Activated CD4-positive, alpha-beta T cell treated with anti-CD3 and anti-CD28 coated beads for 36 hours (primary cell): ENCODE measurements at regions of chr4 and their contacts with region 1.

Region 1: GRCh38 chr4:81351654-81352445 is 119.9 kb downstream of the RASGEF1B start:
- DNase-seq: peak; percentile 82
- ATAC-seq: peak; percentile 74
- H3K4me3 Mint-ChIP-seq: no peak overlapping the region
- H3K27ac Mint-ChIP-seq: no peak overlapping the region
- H3K4me1 Mint-ChIP-seq: no peaks in the 10 kb centered on the region
- H3K27me3 Mint-ChIP-seq: peaks cover 5% of the 10 kb centered on the region

Region 2: DNA sequence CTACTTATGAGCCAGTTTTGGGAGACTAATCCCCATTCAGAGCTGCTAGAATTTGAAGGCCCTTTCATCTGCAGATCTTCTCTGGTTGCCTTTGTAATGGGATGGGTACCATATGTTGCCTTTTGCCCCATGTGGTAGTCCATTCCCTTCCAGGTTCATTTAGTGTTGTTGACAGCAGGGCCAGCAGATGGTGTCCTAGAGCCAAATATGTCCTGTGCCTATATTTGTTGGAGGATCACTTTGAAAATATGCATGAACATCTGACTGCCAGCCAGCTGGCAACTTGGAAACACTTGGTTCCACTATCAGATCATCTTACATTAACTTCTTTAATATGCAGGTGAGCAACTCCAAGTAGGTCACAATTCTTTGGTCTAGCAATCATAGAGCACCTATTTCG is 985.9 kb before region 1 on chr4:
- CTCF ChIA-PET with region 1: interaction called, 3 read pairs
- POLR2A ChIA-PET with region 1: no interaction called
- intact Hi-C with region 1: loop called (anchors 5 kb)
- DNase-seq: peak; percentile 68
- ATAC-seq: no peak
- H3K4me3 Mint-ChIP-seq: no peak overlapping the region
- H3K27ac Mint-ChIP-seq: no peak overlapping the region
- H3K4me1 Mint-ChIP-seq: peaks cover 6% of the 10 kb centered on the region
- H3K27me3 Mint-ChIP-seq: no peaks in the 10 kb centered on the region

Region 3: GRCh38 chr4:80989921-80990544 is 361.8 kb before region 1 on chr4:
- CTCF ChIA-PET with region 1: interaction called, 3 read pairs
- POLR2A ChIA-PET with region 1: no interaction called
- intact Hi-C with region 1: loop called in 1 of 2 experiments (anchors 5 kb)
- DNase-seq: no peak
- ATAC-seq: peak; percentile 49
- H3K4me3 Mint-ChIP-seq: no peak overlapping the region
- H3K27ac Mint-ChIP-seq: no peak overlapping the region
- H3K4me1 Mint-ChIP-seq: no peaks in the 10 kb centered on the region
- H3K27me3 Mint-ChIP-seq: peaks cover 4% of the 10 kb centered on the region

Region 4: DNA sequence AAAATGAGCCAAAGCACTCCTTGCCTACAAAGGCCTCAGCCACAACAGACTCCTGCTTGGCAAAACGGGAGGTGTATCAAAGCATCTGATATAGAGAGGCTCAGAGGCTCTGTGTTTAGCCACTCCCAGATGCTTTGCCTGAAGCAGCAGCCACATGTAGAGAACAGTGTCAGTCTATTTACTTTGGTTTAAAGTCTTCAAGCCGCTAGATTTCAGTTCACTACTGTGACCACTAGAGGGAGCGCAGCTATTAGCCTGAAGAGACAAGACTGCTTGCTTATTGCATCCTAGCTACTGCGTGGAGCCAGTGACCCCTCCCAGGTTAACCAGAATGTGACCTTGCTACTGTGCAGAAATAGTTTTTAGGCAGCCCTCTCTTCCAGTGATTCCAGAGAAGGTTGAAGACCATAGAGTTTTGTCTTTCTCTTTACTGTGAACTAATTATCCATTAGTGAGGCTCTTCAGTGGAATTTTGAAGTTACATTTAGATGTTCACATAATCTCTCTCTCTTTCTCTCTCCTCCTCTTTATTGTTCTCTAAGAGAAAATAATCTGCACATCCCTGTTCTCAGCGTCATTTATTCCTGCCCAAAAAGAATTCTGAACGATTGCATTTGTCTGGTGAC is 282.0 kb before region 1 on chr4:
- CTCF ChIA-PET with region 1: interaction called, 42 read pairs
- POLR2A ChIA-PET with region 1: no interaction called
- intact Hi-C with region 1: loop called (anchors 1 kb)
- DNase-seq: peak; percentile 74
- ATAC-seq: peak; percentile 78
- H3K4me3 Mint-ChIP-seq: no peak overlapping the region
- H3K27ac Mint-ChIP-seq: no peak overlapping the region
- H3K4me1 Mint-ChIP-seq: peaks cover 2% of the 10 kb centered on the region
- H3K27me3 Mint-ChIP-seq: peaks cover 10% of the 10 kb centered on the region

Region 5: DNA sequence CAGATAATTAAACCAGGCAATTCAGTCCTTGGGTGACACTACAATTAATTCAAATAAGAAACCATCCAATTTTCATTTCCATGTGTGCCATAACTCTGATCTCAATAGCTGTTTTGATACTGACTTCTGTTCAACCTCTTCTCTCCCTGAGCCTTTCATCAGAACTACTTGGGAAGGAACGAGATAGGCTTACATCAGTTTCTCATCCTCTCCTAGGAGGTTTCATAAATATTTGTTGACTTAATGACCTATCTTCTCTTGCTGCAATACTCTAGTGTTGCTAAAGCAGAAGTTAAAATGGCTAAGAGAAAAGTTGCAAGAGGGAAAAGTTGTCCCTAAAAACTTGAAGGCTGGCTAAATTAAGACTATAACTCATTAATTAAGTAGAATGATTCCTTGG is 178.6 kb before region 1 on chr4:
- CTCF ChIA-PET with region 1: no interaction called
- POLR2A ChIA-PET with region 1: no interaction called
- intact Hi-C with region 1: no loop called
- DNase-seq: no peak
- ATAC-seq: no peak
- H3K4me3 Mint-ChIP-seq: no peak overlapping the region
- H3K27ac Mint-ChIP-seq: no peak overlapping the region
- H3K4me1 Mint-ChIP-seq: no peaks in the 10 kb centered on the region
- H3K27me3 Mint-ChIP-seq: no peaks in the 10 kb centered on the region

Region 6: DNA sequence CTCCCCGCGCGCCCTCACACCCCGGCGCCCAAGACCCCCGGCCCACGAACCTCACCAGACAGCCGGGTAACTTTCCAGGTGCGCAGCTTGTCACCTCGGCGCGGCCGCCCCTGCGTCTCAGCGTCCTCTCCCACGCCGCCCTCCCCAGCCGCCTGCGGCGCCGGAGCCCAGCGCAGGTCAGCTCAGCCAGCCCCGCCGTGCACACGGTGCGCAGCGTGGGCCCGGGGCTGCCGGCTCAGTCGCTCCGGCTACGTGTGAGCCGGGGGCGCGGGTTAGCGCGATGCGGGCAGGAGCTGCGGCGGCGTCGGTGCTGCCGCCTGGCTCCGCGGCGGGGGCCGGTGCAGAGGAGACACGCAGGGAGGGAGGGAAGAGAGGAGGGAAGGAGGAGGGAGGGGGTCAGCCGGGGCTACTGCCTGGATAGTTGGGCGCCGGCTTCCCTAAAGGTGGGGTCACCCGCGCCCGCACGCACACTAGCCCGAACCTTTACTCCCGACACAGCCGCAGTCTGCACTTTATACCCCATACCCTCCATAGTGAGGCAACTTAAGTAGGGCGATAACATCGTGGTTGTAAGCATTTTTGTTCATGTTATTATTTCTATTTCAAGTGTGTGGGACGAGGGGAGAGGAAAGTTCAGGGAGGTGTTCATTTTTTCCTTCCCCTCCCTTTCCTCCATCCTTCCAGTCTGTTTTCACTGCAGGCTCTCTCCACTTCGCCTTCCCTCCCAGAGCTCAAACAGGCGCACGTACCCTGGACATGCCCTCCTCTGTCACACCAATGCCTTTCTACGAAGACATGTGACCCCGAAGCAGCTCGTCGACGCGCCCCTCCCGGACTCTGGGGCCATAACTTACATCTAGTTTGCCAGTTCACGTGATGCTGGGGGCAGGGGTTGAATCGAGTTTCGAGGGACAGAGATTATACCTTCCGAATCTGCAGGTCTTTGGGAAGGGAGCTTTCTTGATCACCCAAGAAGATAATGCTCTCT is 136.7 kb before region 1 on chr4 and contains the start of gene PRKG2:
- CTCF ChIA-PET with region 1: interaction called, 3 read pairs
- POLR2A ChIA-PET with region 1: no interaction called
- intact Hi-C with region 1: loop called in 1 of 2 experiments (anchors 5 kb)
- DNase-seq: peak; percentile 7
- ATAC-seq: peak; percentile 55
- H3K4me3 Mint-ChIP-seq: peak within 1 kb of the TSS; percentile 36
- H3K27ac Mint-ChIP-seq: no peak within 1 kb of the TSS
- H3K4me1 Mint-ChIP-seq: peaks cover 13% of the 10 kb centered on the region
- H3K27me3 Mint-ChIP-seq: peaks cover 37% of the 10 kb centered on the region
- total RNA-seq, gene PRKG2: 0.05 to 0.14 TPM

Region 7: DNA sequence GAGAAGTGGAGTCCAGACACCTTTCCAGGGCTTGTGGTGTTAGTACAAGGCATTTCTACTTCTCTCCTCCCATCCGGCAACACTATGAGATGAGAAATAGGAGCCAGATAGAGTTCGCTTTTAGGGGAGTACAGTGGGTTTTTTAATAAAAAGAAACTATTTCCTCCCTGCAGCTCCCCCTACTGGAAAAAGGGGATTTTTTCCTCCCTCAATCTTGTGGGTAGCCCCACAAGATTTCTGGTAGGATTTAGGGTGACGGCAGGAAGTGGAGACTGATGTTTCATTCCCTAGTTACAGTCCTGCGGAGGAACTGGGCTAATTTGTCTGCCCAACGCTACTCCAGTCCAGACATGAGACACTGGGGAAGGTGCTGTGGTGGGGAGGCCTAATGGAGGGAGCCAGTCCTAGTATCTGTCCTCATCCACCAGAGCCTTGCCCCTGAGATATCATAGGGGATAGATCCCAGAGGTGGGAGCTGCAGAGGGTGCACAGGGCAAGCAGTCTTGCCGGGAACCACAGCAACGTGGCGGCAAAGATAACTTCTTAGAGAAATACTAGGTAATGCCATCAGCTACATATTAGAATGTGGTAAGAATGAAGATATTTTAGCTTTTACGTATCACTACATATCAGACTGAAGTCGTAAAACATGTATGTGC is 91.3 kb before region 1 on chr4:
- CTCF ChIA-PET with region 1: interaction called, 13 read pairs
- POLR2A ChIA-PET with region 1: no interaction called
- intact Hi-C with region 1: no loop called
- DNase-seq: no peak
- ATAC-seq: no peak
- H3K4me3 Mint-ChIP-seq: no peak overlapping the region
- H3K27ac Mint-ChIP-seq: no peak overlapping the region
- H3K4me1 Mint-ChIP-seq: no peaks in the 10 kb centered on the region
- H3K27me3 Mint-ChIP-seq: peaks cover 8% of the 10 kb centered on the region

Region 8: DNA sequence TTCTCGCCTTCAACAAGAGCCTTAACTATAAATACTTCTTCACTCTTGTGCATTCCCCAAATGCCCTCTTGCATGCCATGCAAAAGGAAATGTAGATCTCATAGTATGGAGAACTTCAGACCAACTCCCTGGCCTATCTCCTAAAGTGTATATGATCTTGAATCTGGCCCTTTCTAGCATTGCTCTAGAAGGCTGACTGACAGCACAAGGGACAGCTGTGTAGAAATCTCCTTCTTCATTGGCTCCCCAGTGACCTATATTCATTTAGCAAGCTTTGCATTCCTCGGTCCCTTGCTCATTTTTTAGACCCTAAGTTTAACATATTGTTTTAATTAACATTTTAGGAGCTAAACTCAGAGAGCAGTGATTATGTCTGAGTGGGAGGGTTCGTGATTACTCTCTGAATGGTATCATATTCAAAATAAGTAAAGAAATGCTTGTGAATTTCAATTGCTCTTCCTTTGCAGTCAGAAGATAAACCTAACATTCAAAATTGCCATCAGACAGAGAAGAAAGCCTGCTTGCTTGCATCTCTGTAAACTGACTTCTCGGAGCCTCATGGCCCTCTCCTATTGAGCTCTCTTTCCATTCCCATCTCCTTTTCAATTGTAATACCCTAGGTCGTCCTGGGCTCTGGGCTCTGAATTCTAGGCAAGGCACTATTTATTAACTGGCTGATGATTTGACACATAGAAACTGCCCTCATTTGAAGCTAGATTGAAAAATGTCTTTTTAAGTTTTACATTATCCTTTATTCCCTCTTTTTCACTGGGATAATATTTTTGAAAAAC is 16.5 kb before region 1 on chr4:
- CTCF ChIA-PET with region 1: interaction called, 13 read pairs
- POLR2A ChIA-PET with region 1: no interaction called
- intact Hi-C with region 1: no loop called
- DNase-seq: no peak
- ATAC-seq: no peak
- H3K4me3 Mint-ChIP-seq: no peak overlapping the region
- H3K27ac Mint-ChIP-seq: no peak overlapping the region
- H3K4me1 Mint-ChIP-seq: no peaks in the 10 kb centered on the region
- H3K27me3 Mint-ChIP-seq: no peaks in the 10 kb centered on the region

Region 9: DNA sequence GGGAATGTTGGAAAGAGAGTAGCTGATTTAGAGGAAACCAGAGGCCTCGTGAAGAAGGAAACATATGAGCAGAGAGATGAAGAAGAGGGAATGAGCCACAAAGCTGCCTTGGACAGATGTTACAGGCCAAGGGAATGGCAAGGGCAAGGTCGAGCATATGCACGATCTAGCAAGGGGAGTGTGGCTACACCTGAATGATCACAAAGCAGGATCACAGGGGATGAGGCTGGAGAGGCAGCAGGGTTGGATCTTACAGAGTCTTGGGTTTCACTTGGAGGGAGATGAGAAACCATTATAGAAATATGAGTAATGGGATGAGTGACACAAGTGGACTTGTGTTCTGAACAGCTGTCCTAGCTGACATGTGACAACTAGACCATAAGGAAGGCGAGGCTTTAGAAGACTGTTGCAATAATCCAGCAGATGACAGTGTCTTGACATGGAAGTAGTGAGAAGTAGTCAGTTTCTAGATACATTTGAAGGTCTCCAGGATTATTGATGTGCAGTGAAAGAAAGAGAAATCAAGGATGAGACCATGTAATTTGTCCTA is 61.2 kb after region 1 on chr4:
- CTCF ChIA-PET with region 1: no interaction called
- POLR2A ChIA-PET with region 1: no interaction called
- intact Hi-C with region 1: no loop called
- DNase-seq: no peak
- ATAC-seq: no peak
- H3K4me3 Mint-ChIP-seq: no peak overlapping the region
- H3K27ac Mint-ChIP-seq: no peak overlapping the region
- H3K4me1 Mint-ChIP-seq: no peaks in the 10 kb centered on the region
- H3K27me3 Mint-ChIP-seq: no peaks in the 10 kb centered on the region